Prostate gland (tissue), 2 donors: ENCODE measurements at regions of chr5 and their contacts with region 1.

Region 1: DNA sequence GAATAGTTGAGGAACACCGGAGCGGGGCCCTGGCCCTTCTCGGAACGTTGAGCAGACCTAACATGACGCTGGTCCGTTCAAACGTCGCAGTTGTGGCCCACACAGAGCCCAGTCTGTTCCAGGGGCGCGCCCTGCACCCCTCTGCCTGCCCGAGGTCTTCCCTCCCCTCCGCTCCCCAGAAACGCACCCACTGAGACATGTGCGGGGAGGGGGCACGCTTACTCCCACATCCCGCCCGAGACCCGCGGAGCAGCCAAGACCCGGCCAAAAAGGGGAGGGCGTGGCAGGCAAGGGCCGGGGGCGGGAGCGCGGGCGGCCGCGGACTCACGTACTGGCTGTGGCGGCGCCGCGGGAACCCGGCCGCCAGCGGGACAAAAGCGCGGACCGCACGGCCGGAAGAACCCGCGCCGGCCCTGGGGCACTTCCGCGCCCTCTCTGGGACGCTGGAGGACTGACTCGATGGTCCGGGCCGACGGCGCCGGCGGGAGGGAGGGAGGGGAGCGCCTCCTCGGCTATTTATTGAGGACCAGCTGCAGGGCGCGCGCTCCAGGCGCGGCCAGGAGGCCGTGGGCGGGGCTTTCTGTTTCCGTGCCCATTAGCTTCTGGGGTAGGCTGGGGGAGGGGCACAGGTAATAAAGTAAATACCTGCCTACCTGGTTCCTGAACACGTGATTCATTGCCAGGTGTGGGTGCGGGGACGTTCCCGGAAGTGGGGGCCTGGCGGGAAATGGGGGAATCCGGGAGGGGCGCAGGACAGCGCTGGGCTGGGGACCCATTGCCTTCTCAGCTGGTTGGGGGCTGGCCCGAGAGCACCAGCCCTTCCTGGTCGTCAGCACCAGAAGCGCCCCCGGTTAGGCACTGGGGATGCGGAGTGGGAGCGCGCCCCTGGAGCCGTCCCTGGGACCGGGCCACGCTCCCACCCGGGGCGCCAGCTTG is at the start of gene ZFP62:
- DNase-seq: peak; percentile 92
- H3K4me3 ChIP-seq: peak within 1 kb of the TSS; percentile 77 to 91
- H3K27ac ChIP-seq: peak within 1 kb of the TSS; percentile 89 to 90
- H3K4me1 ChIP-seq: no peaks in the 10 kb centered on the region
- H3K27me3 ChIP-seq: no peaks in the 10 kb centered on the region
- CTCF ChIP-seq: peak in 1 of 4 experiments; percentile 3
- POLR2A ChIP-seq: peak; percentile 57
- total RNA-seq, gene ZFP62: 24.5 to 28.1 TPM

Region 2: GRCh38 chr5:180784497-180785097 is 76.6 kb before region 1 on chr5:
- intact Hi-C with region 1: loop called (anchors 2 kb)
- DNase-seq: peak; percentile 78
- H3K4me3 ChIP-seq: no peak overlapping the region
- H3K27ac ChIP-seq: peak overlapping the region; percentile 64 to 72
- H3K4me1 ChIP-seq: peaks cover 16% of the 10 kb centered on the region
- H3K27me3 ChIP-seq: no peaks in the 10 kb centered on the region
- CTCF ChIP-seq: peak; percentile 49 to 80 (median 68)
- POLR2A ChIP-seq: no peak

Region 3: GRCh38 chr5:180802325-180803180 is 58.6 kb before region 1 on chr5 and contains the start of gene MGAT1:
- intact Hi-C with region 1: loop called (anchors 5 kb)
- DNase-seq: peak; percentile 86
- H3K4me3 ChIP-seq: peak within 1 kb of the TSS; percentile 91 to 94
- H3K27ac ChIP-seq: peak within 1 kb of the TSS; percentile 98 to 99
- H3K4me1 ChIP-seq: peaks cover 34% of the 10 kb centered on the region
- H3K27me3 ChIP-seq: no peaks in the 10 kb centered on the region
- CTCF ChIP-seq: peak in 2 of 4 experiments; percentile 12 to 22
- POLR2A ChIP-seq: peak; percentile 84
- total RNA-seq, gene MGAT1: 142 to 159 TPM

Region 4: DNA sequence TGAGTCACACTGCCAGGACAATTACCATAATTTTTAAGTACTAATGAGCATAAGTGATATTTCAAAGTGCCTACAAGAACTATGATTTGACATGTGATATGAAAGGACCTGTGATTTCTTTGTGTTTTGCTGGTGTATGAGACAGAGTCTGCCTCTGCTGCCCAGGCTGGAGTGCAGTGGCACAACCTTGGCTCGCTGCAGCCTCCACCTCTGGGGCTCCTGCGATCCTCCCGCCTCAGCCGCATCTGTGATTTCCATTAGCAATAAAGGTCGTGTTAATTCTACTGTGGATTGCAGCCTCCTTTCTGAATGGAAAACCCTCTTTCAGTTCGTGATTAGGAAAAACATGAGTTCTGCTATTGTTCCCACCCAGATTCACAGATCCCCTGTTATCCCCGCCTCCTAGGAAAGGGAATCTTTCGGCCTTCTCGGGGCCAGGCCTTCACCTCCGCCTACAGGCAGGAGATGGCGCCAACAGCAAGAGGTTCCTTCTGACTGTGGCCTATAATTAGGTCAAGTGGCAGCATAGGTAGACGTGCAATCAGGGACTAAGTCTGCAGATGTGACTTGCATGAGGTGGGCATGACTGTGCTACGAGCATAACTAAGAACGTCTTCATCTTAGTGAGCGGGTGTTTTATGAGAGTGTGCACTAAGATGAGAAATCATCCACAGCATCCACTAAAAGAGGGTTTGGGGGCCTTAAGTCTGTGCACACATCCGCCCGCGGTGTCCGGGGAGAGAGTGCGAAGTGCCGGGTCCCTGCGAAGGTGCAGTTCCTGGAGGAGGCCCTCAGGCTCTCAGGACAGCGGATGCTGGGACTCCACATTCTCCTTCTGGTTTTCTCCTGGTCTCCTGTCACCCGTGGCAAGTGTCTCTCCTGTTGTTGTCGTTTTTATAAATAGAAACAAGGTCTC is 320.8 kb after region 1 on chr5:
- intact Hi-C with region 1: loop called (anchors 10 kb)
- DNase-seq: no peak
- H3K4me3 ChIP-seq: no peak overlapping the region
- H3K27ac ChIP-seq: no peak overlapping the region
- H3K4me1 ChIP-seq: no peaks in the 10 kb centered on the region
- H3K27me3 ChIP-seq: no peaks in the 10 kb centered on the region
- CTCF ChIP-seq: peak; percentile 28 to 84 (median 61)
- POLR2A ChIP-seq: no peak

Region 5: DNA sequence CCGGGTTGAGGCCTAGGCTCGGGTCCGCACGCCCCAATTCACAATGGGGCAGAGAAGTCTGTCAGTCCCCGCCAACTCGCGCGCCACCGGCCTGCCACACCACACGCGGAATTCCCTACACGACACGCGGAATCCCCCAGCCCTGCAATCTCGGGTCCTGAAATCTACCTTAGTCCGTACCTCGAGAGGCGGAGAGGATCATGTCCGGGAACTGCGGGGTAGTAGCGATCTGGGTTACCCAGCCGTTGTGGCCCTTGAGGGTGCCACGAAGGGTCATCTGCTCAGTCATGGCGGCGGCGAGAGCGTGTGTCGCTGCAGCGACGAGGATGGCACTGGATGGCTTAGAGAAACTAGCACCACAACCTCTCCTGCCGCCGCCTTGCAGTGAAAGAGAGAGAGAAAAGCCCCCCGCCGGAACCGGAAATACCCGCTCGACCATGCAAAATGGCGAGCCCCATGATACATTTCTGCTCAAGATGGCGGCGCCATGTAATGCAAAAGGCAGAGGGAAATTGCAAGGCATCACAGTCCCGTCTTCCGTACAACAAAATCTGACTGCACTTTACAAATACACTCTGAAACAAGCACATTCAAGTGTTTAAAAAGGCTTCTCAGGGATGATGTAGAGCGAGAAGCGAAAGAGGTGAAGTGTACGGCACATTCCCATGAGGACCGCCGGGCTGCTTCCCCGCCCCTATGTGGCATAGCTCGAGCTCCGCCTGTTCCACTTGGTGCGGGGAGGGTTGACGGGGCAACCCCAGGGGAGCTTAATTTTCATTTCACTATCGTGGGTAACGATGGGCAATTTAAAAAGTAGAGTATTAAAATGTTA is 382.6 kb after region 1 on chr5 and contains the start of gene RACK1:
- intact Hi-C with region 1: loop called (anchors 10 kb)
- DNase-seq: peak; percentile 88
- H3K4me3 ChIP-seq: peak within 1 kb of the TSS; percentile 57 to 67
- H3K27ac ChIP-seq: peak within 1 kb of the TSS; percentile 77 to 92
- H3K4me1 ChIP-seq: peaks cover 13% of the 10 kb centered on the region
- H3K27me3 ChIP-seq: no peaks in the 10 kb centered on the region
- CTCF ChIP-seq: no peak
- POLR2A ChIP-seq: peak; percentile 30
- total RNA-seq, gene RACK1: 2,058 to 4,360 TPM